MCF 10A (cell line): ENCODE measurements at regions of chr4 and their contacts with region 1.

Region 1: GRCh38 chr4:139030614-139031235 is 15.1 kb downstream of the NOCT start:
- DNase-seq: peak; percentile 85
- H3K4me3 Mint-ChIP-seq: no peak overlapping the region
- H3K27ac Mint-ChIP-seq: no peak overlapping the region
- H3K4me1 Mint-ChIP-seq: peaks cover 11% of the 10 kb centered on the region
- H3K27me3 Mint-ChIP-seq: no peaks in the 10 kb centered on the region
- CTCF ChIP-seq: peak; percentile 70

Region 2: GRCh38 chr4:139015269-139015947 is 15.3 kb before region 1 on chr4 and contains the start of gene NOCT:
- CTCF ChIA-PET with region 1: interaction called, 84 read pairs
- POLR2A ChIA-PET with region 1: interaction called, 56 read pairs
- intact Hi-C with region 1: no loop called
- DNase-seq: peak; percentile 94
- H3K4me3 Mint-ChIP-seq: peak within 1 kb of the TSS; percentile 72
- H3K27ac Mint-ChIP-seq: peak within 1 kb of the TSS; percentile 95
- H3K4me1 Mint-ChIP-seq: peaks cover 38% of the 10 kb centered on the region
- H3K27me3 Mint-ChIP-seq: no peaks in the 10 kb centered on the region
- CTCF ChIP-seq: no peak
- total RNA-seq, gene NOCT: 16.5 and 25.5 TPM in 2 replicates

Region 3: GRCh38 chr4:139053909-139054308 is 23.2 kb after region 1 on chr4:
- CTCF ChIA-PET with region 1: interaction called, 16 read pairs
- POLR2A ChIA-PET with region 1: interaction called, 4 read pairs
- intact Hi-C with region 1: no loop called
- DNase-seq: no peak
- H3K4me3 Mint-ChIP-seq: no peak overlapping the region
- H3K27ac Mint-ChIP-seq: no peak overlapping the region
- H3K4me1 Mint-ChIP-seq: peaks cover 19% of the 10 kb centered on the region
- H3K27me3 Mint-ChIP-seq: no peaks in the 10 kb centered on the region
- CTCF ChIP-seq: no peak

Region 4: DNA sequence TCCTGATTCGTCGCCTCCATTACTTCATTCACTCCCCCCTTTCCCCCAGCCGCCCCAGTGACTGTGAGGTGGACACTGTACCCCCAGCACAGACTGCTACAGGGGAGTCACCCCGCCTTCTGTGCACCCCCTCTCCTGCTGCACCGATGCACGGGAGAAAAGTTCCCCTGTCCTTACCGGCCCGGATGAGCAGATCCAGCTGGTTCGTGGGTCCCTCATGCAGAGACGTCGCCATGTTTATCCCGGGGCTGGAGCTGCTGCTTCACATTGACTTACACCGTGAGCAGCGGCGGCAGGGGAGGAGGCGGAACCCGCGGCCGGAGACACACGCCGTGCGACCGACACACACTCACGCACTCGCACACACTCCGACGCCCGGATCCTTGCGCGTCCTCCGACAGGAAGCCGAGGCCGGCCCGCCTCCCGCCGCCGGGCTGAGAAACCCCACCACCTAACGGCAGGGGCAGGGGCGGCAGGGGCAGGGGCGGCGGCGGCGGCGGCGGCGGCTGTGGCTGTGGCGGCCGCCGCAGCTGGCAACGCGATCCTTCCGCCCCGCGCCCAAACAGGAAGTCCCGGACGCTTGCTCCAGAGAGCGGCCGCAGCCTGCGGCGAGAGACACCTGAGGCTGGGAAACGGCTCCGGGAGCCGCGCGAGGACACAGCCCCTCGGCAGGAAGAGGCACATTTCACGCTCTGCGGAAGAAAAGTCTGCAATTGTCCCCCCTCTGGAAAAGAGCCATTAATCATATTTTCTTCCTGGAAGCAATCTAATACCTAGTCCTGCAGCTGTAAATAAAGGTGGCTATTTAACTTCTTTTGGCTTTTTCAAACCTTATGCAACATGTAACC is 53.5 kb after region 1 on chr4:
- CTCF ChIA-PET with region 1: interaction called, 27 read pairs
- POLR2A ChIA-PET with region 1: interaction called, 22 read pairs
- intact Hi-C with region 1: loop called (anchors 2 kb)
- DNase-seq: peak; percentile 91
- H3K4me3 Mint-ChIP-seq: peak overlapping the region; percentile 97
- H3K27ac Mint-ChIP-seq: peak overlapping the region; percentile 95
- H3K4me1 Mint-ChIP-seq: peaks cover 15% of the 10 kb centered on the region
- H3K27me3 Mint-ChIP-seq: no peaks in the 10 kb centered on the region
- CTCF ChIP-seq: no peak

Region 5: DNA sequence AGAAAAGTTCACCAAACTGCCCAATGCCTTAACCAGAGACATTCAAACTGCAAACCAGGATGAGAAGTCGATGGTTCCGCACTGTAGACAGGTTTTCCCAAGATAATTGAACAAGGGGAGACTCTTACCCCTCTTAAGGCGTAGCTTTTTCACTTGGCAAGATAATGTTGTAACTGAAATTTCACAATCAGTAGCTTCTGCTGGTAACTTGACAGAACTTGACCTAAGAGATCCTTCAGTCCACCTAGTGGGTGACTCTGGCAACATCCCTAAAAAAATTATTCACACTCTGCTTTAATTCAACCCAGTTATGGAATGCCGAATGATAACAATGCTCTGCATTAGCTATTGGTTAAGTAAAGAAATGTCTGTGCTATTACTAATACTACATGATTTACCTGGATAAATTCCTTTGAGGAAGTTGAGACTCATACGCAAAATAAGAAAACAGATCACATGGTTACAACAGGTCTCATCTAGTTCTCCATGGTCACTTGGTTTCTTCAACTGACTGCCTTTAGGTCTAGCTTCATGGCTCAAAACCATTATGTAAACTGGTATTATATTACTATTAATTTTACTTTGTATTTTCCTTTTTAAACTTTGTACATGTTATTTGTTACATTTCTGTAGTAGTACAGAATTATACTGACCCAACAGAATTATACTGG is 137.2 kb after region 1 on chr4:
- CTCF ChIA-PET with region 1: interaction called, 19 read pairs
- POLR2A ChIA-PET with region 1: interaction called, 6 read pairs
- intact Hi-C with region 1: loop called (anchors 5 kb)
- DNase-seq: peak; percentile 87
- H3K4me3 Mint-ChIP-seq: no peak overlapping the region
- H3K27ac Mint-ChIP-seq: peak overlapping the region; percentile 27
- H3K4me1 Mint-ChIP-seq: peaks cover 30% of the 10 kb centered on the region
- H3K27me3 Mint-ChIP-seq: no peaks in the 10 kb centered on the region
- CTCF ChIP-seq: peak; percentile 57